Head of caudate nucleus (tissue), 42 donors: ENCODE measurements at regions of chr6 and their contacts with region 1.

Region 1: GRCh38 chr6:40179496-40179895 is 245.2 kb upstream of the MOCS1 start:
- DNase-seq: no peak

Region 2: GRCh38 chr6:40167036-40167435 is 12.5 kb before region 1 on chr6:
- intact Hi-C with region 1: loop called (anchors 1 kb)
- DNase-seq: no peak

Region 3: DNA sequence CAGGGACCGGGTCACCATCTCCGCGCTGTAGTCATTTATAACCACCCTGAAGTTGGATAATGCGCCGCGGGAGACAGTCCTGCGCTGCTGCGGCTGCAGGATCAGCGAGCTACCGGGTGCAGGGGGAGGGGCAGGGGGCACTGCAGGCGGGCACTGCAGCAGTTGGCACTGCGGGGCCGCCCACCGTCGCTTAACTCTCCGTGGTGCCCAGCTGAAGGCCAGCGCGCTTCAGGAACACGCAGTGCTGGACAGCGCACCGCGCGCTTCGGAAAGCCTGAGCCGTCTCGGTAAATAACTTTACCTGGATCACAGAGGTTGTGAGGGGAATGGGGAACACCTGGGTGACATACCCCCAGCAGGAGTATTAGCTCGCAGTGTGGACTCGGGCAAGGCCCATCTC is 420.1 kb after region 1 on chr6:
- intact Hi-C with region 1: no loop called
- DNase-seq: no peak